ENCODE measurements at regions of chr6 and their contacts with region 1.

Region 1: GRCh38 chr6:25490018-25490801 is 161.8 kb upstream of the SCGN start:
- DNase-seq: peak; percentile 66
- ATAC-seq: peak; percentile 77 to 88

Region 2: GRCh38 chr6:25263657-25264056 is 226.6 kb before region 1 on chr6:
- intact Hi-C with region 1: loop called in 1 of 2 experiments (anchors 2 kb)
- DNase-seq: no peak
- ATAC-seq: peak in 1 of 2 donors; percentile 64

Region 3: GRCh38 chr6:25278914-25279747 is 211.1 kb before region 1 on chr6 and contains the start of gene CARMIL1:
- intact Hi-C with region 1: loop called (anchors 1 to 5 kb)
- DNase-seq: peak; percentile 85
- ATAC-seq: peak; percentile 94 to 95
- total RNA-seq, gene CARMIL1: 10.8 to 11.3 TPM

Region 4: GRCh38 chr6:25697537-25698345 is 207.5 kb after region 1 on chr6:
- intact Hi-C with region 1: no loop called
- DNase-seq: no peak
- ATAC-seq: no peak